Breast epithelium (tissue), 4 donors: ENCODE measurements at regions of chr13 and their contacts with region 1.

Region 1: DNA sequence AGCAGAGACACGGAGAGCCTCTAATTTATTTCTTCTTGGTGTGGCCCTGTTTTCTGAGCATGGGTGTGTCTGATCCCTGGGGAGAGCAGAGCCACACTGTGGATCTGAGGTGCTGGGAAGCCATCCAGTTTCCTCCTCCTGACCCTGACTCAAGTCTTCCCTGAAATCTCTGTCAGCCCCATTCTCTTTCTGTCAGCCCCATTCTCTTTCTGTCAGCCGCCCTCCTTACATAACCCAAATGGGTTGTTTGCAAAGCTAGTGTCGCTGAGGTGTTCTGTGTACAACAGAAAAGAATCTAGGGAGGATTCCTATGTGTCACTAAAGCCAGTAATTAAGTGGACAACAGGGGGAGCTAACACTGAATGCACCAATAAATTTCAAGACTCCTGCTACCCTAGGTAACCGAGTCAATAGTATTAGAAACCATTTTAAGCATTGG is 50.2 kb downstream of the LRCH1 start:
- DNase-seq: no peak
- H3K4me3 ChIP-seq: no peak overlapping the region
- H3K27ac ChIP-seq: peak overlapping the region in 1 of 2 donors; percentile 73
- H3K4me1 ChIP-seq: peaks cover 0 to 13% of the 10 kb centered on the region in 2 donors
- H3K27me3 ChIP-seq: no peaks in the 10 kb centered on the region
- CTCF ChIP-seq: no peak
- POLR2A ChIP-seq: no peak

Region 2: DNA sequence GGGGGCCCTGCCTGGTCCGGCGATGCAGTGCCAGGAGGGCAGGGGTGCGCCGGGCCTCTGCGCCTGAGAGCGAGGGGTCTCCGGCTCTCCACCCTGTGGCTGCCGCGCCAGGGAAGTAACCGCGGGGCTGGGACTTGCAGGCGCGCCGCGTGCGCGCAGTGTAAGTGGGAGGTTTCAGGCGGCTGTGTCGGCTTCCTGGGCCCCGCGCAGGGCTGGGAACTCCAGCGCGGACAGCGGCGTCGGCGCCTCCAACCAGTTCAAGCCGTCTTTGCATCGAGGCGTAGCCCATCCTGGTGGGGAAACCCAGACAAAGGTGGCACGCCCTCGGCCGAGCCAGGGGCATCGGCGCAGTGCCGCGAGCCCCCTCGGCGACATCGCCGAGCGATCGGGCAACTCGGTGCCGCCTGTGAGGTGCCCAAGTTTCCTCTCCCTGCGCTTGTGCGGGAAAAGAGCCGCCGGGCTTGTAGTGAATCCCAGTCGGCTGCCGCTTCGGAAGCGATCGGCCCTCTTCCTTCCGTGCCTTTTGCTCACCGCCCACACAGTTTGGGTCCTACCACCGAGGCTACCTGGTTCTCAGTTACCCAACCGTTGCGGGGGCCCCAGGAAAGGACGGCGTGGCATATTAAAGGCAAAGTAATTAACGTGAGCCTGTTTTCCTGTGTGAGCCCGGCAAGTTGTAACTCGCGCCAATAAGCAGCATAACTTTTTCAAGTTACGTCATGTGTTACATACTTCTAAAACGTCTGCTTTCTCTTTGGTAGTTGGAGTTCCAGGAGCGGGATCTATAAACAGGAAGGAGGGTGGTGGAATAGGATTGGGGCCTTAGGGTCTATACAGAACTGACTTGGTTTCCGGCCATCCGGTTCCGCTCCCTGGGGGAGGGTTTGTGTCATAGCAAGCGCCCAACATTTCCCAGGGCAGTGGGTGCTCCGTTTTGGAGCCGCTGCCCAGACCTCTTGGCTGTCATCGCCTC is 49.0 kb before region 1 on chr13:
- intact Hi-C with region 1: loop called (anchors 5 kb)
- DNase-seq: peak; percentile 63 to 69
- H3K4me3 ChIP-seq: peak overlapping the region; percentile 84 to 96 (median 96)
- H3K27ac ChIP-seq: peak overlapping the region; percentile 88 to 96
- H3K4me1 ChIP-seq: peaks cover 0 to 7% of the 10 kb centered on the region in 2 donors
- H3K27me3 ChIP-seq: no peaks in the 10 kb centered on the region
- CTCF ChIP-seq: peak in 2 of 3 donors; percentile 24 to 43
- POLR2A ChIP-seq: no peak